PC-3 (cell line): ENCODE measurements at regions of chr13 and their contacts with region 1.

Region 1: DNA sequence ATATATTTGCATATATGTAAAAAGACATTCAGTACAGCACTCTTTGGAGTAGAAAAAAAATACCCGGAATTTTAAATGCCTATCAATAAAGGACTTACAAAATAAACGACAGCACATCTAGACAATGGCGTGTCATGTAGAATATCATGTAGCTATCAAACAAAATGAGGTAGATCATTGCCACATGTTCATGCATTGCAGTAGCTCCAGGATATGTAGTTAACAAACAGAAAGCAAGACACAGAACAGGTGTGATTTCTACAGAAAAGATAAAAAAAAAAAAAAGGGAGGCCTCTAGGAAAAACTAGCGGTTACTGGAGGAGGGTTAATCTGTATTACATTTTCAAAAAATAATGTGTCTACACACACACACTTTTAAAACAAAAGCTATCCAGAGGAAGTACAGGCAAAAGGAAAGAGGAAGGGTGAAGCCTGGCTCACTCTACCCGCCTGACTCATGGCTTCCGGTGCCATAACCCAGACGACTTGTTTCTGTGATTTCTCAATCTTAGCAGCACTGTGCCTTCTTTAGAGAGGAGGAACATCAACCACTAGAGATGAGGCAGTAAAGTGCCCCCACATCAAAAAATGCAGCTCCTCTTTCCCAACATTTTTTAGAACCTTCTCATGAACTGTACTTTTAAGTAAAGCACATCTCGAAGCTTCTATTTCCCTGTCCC is 6.9 kb downstream of the KCTD12 start:
- DNase-seq: peak; percentile 65
- ATAC-seq: peak; percentile 98
- H3K4me3 ChIP-seq: no peak overlapping the region
- H3K27ac ChIP-seq: peak overlapping the region; percentile 43
- H3K4me1 ChIP-seq: peaks cover 21% of the 10 kb centered on the region
- H3K27me3 ChIP-seq: no peaks in the 10 kb centered on the region
- CTCF ChIP-seq: no peak

Region 2: GRCh38 chr13:76837801-76838200 is 41.5 kb before region 1 on chr13:
- CTCF ChIA-PET with region 1: no interaction called
- POLR2A ChIA-PET with region 1: no interaction called
- intact Hi-C with region 1: loop called (anchors 5 kb)
- DNase-seq: no peak
- ATAC-seq: peak; percentile 40; the same call in 1 of the 2 replicates
- H3K4me3 ChIP-seq: no peak overlapping the region
- H3K27ac ChIP-seq: no peak overlapping the region
- H3K4me1 ChIP-seq: peaks cover 14% of the 10 kb centered on the region
- H3K27me3 ChIP-seq: no peaks in the 10 kb centered on the region
- CTCF ChIP-seq: no peak